ENCODE measurements at regions of chr20 and their contacts with region 1.

Region 1: GRCh38 chr20:15214051-15214450 is 876.6 kb upstream of the FLRT3 start:
- DNase-seq: no peak

Region 2: DNA sequence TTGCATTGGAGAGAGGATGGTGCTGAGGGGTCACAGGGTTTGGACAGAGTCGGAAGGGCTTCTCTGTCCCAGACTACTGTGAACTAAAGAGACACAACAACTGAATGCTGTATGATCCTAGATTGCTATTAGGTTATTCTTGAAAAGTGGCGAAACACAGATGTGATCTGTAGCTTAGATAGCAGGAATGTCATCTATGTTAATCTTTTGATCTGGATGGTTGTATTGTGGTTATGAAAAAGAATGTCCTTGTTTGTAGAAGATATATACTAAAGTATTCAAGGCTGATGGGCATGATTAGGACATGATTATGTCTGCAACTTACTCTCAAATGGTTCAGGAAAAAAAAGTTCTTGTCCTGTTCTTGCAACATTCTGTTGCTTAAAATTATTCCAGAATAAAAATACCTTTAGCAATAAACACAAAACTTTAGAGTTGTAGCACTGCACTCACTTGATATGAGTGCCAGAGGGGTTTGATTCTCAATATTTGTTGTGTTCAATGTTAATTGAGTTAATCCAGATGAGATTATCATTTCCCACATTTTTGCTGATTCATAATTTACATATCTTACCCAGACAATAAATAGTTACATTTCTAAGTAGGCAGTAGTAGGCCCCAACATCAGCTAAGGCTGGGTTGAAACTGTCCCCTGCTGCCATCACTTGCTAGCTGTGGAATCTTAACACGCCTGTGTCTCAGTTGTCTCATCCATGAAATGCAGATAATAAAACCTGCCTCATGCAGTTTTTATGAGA is 714.0 kb after region 1 on chr20:
- intact Hi-C with region 1: loop called in 1 of 2 experiments (anchors 5 kb)
- DNase-seq: no peak